ENCODE measurements at regions of chr6 and their contacts with region 1.

Region 1: DNA sequence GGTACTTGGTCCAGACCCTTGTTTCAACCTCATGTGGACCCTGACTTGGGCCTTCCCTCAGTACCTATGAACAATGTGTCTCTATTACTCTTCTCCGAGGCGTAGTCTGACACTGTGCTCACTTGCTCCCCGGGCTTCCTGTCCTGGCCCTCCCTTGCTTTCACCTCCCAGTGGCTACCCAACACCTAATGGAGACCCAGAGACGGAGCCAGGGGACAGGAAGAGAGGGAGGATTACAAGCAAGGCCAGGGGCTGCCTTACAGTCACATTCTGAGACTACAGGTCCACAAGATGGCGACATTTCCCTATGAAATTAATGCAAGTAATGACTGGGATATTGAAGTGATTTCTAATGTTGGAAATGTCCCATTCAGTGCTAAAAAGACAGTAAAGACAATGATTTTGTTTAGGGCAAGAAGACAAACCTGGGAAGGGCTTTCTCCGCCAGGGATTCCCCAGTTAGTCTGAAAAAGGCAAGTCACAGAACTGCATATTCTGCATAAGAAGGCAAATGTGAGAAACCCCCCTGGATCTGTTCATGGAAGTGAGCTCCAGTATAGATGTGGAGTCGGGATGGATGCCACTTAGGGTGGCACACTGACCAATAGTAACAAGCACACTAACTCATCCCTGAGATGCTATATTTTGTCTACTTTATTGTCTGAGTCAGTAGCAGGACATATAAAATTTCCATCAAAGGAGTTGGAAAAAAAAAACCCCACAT is 44.0 kb upstream of the ZBTB24 start:
- DNase-seq: peak in 1 of 2 donors; percentile 20
- H3K4me3 ChIP-seq: no peak overlapping the region
- CTCF ChIP-seq: no peak
- POLR2A ChIP-seq: no peak

Region 2: DNA sequence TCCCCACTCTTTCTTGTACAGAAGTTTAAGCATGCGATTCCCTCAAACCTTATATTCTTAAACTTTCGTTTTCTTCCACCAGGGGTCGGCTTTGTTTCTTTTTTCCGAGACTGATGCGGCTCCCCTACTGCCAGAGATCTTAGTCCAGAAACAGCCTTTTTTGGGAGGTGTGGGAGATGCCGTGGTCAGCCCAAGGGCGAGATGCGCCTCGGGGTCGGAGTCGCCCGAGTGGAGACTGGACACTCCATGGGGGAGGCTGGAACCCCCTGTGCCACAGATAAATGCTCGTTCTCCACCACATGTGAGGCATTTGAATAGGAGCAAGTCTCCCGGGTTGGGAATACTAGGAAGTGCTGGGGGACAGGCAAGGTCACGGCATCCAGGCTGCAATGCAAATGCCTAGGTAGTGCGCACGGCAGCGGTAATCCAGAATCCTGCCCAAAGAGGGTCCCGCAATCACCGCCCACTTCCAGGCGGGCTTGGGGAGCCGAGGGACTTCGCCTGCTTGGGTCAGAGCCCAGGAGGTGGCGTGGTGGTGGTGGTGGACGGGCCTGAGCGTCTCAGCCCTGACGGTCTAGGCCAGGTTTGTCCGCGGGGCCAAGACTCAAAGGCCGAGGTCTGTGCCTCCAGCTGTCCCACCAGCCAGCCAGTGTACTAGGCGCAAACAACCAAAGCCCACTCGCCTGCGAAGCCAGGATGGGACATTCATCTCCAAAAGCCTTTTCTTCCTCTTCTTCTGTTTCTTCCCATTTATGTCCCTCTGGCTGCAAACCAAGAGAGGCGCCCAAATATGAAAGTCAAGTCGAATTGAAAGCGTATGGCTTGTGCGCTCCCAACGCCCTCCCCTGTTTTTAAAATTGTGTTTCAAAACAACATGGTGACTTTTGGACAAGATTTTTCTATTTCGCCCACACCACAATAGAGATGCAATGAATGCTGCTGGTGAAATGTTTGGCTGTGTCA is 1413.2 kb before region 1 on chr6:
- intact Hi-C with region 1: no loop called
- DNase-seq: no peak
- H3K4me3 ChIP-seq: no peak overlapping the region
- CTCF ChIP-seq: no peak
- POLR2A ChIP-seq: no peak

Region 3: DNA sequence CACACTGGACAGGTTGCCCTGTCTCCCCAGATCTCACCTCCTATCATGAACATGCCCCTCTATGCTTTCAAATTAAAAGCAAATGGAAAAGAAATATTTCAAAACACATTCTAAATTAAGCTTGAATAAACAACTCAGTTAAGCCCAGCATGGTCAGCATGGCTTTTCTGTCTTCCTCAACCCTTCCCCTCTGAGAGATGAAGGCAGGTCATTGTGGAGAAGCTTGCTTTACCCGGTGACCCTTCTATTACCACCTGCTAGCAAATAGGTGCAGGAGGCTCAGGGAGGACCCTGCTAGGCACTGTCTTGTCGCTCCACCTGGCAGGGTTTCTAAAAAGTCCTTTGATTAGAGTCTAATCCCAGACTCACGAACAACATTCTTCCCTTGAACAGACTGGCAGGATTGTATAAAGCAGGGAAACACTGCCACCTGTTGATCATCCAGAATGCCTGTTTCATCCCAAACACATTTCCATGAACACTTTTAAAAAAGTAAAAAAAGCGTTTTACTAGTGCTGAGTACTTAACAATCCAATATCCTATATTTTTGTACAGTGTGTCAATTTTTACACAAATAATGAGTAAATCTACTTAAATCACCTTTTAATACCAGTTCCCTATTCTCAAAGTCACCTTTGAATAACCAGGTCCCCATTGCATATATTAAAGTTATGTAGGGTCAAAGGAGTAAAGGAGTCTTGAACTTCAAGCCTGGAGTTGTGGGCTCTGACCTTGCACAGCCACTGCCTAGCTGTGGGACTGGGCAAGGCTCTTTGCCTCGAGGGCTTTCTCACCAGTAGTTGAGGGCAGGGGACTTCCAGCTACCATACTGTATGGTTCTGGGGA is 526.6 kb after region 1 on chr6:
- intact Hi-C with region 1: loop called (anchors 10 kb)
- DNase-seq: no peak
- H3K4me3 ChIP-seq: no peak overlapping the region
- CTCF ChIP-seq: no peak
- POLR2A ChIP-seq: no peak